ENCODE measurements at regions of chr13 and their contacts with region 1.

Region 1: DNA sequence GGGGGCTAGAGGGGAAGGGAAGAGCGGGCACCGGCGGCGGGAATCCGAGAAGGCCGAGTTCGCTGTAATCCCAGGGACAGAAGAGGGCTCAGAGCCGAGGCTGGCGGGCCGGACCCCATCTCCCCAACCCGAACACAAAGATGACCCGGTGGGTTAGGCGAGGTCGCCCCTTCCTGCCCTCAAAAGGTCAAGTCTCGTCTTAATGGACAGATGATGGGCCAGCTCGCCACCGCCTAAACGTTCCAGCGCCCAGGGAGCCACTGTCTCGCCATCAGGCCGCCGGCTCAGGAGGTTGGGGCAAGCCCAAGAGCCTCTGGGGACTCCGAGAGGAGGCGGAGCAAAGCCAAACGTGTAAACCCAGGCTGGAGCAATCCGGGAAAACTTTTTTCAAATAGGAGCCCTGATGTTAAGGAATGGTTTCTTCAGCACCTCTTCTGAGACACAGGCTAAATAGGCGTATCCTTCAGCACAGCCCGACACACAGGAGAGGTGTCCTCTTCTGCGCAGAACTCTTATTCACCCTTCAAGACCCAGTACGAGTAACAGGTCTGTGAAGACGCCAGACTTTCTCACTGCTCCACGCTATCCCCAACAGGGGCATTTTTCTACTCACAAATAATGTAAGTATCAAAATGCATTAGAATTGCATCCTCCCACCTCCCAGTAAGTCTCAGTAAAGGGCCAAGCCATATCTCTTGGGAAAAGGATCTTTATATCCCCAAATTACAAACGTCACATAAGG is 6.3 kb upstream of the POU4F1 start:
- DNase-seq: no peak

Region 2: DNA sequence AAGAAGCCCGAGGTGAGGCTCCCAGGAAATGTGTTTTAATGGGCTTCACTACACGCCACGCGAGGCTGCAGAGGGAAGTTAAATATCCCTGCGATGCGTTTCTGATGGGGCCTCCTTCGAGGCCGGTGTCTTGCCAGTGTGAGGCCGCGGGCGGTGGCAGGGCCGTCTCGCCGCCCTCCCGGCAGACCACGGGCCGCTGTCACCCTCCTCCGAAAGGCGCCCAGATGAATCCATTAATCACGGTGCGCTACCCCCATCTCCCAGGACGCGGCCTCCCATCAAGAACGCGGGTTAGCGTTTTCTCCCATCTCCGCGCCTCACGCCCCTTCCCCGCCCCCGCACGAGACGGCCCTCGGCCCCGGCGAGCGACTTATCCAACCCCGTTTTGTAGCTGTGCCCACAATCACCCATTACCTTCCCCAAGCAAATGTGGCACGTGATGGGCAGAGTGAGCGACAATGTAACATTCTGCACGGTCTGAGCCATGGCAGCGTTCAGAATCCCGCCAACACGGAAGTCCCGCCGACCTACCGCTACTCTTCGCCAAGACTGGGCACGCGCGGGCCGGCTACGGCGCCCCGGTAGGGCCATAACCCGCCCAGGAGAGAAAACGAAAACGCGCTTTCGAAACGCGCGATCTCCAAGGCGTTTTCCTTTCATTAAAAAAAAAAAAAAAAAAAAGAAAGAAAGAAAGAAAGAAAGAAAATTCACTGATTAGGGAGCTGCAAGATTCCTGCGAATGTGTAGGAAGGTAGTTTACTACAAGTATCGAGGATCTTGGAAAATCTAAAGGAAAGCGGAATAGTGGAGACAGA is 49.2 kb after region 1 on chr13 and contains the start of gene OBI1:
- intact Hi-C with region 1: loop called (anchors 5 kb)
- DNase-seq: peak; percentile 96
- total RNA-seq, gene OBI1: 9.7 TPM